A673 (cell line): ENCODE measurements at regions of chr3 and their contacts with region 1.

Region 1: DNA sequence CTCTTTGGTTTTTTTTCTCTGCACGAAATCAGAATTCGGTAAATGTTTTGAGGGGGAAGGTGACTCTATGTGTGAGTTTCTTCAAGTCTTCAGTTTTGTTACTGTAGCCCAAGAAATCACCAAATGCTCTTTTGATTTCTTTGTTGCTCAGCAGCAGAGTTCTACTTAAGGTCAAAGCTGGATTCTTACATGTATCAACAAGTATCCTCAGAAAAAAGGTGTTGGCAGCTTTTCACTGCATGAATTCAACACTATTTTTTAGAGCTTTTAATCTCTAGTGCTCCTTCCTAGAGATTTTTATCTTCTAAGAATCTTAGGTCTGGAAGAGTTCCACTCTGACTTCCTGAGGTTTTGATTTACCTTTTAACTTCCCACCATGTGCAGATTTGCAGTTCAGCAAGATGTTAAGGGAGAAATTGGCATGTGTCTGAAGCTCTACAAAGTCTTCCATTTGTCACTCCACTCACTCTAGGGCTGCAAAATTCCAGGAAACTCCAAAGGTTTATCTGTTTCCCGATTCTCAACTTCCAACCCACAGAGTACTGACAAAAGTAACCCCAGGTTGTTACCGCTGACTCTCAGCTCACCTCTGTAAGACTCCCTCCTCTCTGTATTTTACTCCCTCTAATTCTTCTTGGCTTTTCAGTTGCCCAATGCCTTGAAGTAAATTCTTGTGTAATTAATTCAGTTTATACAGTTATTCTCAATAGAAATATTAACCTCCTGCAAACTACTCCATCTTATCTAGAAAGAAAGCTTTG is 13.3 kb upstream of the CD200 start:
- DNase-seq: no peak
- H3K4me3 ChIP-seq: no peak overlapping the region
- H3K27ac ChIP-seq: no peak overlapping the region
- H3K4me1 ChIP-seq: no peaks in the 10 kb centered on the region
- H3K27me3 ChIP-seq: no peaks in the 10 kb centered on the region
- CTCF ChIP-seq: no peak

Region 2: DNA sequence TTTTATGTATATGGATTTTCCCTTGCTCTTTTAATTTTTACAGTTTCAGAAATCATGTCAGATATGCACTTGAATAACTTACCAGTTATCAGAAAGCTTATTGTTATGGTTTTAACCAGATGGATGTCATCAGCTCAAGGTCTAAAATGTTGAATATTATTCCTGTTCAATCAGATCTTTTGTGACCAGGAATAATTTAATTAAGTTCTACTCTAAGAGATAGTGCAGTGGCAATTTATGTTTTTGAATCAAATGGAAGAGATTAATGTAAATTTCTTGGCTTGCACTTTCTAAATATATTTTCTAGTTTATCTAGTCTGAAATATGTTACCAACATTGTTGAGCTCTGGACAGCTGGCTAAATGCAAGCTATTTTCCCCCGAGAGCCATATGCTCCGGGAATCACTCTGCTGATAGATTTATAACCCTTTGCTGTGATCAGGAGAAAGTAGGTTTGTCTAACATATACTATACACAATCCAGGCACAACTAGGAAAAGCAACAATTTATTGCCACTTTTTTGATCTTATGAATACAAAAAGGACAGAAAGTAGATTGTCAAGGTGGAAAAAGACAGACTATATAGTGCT is 854.5 kb before region 1 on chr3:
- CTCF ChIA-PET with region 1: no interaction called
- POLR2A ChIA-PET with region 1: no interaction called
- intact Hi-C with region 1: no loop called
- DNase-seq: peak; percentile 1
- H3K4me3 ChIP-seq: no peak overlapping the region
- H3K27ac ChIP-seq: no peak overlapping the region
- H3K4me1 ChIP-seq: no peaks in the 10 kb centered on the region
- H3K27me3 ChIP-seq: no peaks in the 10 kb centered on the region
- CTCF ChIP-seq: no peak

Region 3: DNA sequence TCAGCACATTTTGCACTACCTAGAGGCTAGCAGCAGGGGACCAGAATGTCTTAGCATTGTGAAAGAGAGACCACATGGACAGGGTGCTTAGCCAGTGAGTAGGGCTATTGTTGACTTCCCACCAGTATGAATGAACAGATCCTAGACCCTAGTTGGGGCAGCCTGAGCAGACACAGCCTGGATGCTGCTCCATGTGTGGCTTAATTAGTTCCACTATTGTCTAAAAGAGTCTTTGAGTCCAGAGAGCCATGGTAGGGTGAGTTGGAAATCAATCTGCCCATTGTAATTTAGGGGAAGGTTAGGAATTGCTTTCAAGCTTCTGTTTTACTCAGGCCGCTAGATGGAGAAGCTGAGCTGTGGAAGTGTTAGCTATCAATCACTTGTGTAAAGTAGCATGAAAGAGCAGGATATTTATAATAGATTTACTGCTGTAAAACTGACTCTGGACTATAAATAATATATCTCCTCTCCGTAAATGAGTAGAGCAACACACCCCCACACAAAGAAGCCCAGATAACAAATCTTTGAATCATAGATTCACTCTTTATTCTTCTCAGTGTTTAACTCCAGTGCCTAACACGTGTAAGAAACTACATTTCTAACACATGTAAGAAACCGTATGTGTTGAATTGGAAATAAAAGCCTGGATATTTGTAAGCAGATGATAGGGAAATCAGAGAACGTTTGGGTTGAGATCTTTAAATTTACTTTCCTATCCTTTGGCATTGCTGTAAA is 182.6 kb before region 1 on chr3:
- CTCF ChIA-PET with region 1: no interaction called
- POLR2A ChIA-PET with region 1: no interaction called
- intact Hi-C with region 1: loop called (anchors 10 kb)
- DNase-seq: peak; percentile 71
- H3K4me3 ChIP-seq: no peak overlapping the region
- H3K27ac ChIP-seq: no peak overlapping the region
- H3K4me1 ChIP-seq: no peaks in the 10 kb centered on the region
- H3K27me3 ChIP-seq: no peaks in the 10 kb centered on the region
- CTCF ChIP-seq: peak; percentile 77